ENCODE measurements at regions of chr1 and their contacts with region 1.

Region 1: DNA sequence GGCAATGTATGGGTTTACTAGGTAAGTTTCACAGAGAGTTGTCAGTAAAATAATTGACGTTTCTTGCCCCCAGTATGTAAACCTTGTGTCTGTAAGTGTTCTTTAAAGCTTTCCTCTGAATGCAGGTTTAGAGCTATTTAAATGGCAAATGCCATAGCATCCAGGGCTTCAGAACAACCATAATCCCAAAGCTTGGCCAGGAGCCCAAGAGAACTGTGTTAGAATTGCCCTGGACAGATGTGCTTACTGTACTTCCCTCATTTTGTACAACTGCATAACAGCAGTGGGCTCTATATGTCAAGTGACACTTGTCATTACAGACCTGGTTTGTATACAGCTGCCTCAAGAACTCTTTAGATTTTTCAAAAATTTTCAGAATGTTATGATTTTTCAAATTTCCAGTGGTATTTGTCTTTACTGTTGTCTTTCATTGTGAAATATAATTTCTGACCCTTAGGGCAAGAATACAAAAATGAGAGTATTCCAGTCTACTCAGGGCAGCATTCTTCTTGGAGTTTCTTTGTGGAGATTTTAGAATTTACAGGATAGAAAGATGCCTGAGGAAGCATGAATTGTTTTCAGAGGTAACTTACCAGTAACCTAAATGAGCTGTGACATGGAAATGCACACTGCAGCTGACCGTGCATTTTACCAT is 136.9 kb upstream of the L1TD1 start:
- DNase-seq: no peak
- H3K4me3 ChIP-seq: no peak overlapping the region
- H3K4me3 Mint-ChIP-seq: no peak overlapping the region
- H3K27ac Mint-ChIP-seq: no peak overlapping the region
- H3K4me1 ChIP-seq: no peaks in the 10 kb centered on the region
- H3K4me1 Mint-ChIP-seq: no peaks in the 10 kb centered on the region
- H3K27me3 ChIP-seq: no peaks in the 10 kb centered on the region
- H3K27me3 Mint-ChIP-seq: no peaks in the 10 kb centered on the region
- CTCF ChIP-seq: no peak

Region 2: DNA sequence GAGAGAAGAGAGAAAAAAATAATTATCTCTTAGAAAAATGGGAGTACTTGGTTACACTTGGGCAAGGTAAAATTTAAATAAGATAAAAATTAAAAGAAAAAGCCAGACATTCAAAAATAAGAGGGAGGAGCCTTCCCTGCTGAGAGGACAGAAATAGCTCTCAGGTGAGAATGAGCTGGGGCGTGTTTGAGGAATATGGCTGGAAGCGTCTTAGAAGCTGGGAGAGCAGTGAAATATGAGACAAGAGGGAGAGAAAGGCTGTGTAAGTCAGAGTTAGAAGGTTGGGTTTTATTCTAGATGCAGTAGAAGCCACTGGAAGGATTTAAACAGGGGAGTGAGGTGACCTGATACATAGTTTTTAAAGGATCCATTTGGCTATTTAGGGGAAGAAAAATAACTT is 17.3 kb before region 1 on chr1:
- CTCF ChIA-PET with region 1: no interaction called
- POLR2A ChIA-PET with region 1: no interaction called
- intact Hi-C with region 1: loop called (anchors 1 kb)
- DNase-seq: no peak
- H3K4me3 ChIP-seq: no peak overlapping the region
- H3K4me3 Mint-ChIP-seq: no peak overlapping the region
- H3K27ac Mint-ChIP-seq: no peak overlapping the region
- H3K4me1 ChIP-seq: peaks cover 8% of the 10 kb centered on the region
- H3K4me1 Mint-ChIP-seq: peaks cover 13% of the 10 kb centered on the region
- H3K27me3 ChIP-seq: no peaks in the 10 kb centered on the region
- H3K27me3 Mint-ChIP-seq: no peaks in the 10 kb centered on the region
- CTCF ChIP-seq: no peak

Region 3: DNA sequence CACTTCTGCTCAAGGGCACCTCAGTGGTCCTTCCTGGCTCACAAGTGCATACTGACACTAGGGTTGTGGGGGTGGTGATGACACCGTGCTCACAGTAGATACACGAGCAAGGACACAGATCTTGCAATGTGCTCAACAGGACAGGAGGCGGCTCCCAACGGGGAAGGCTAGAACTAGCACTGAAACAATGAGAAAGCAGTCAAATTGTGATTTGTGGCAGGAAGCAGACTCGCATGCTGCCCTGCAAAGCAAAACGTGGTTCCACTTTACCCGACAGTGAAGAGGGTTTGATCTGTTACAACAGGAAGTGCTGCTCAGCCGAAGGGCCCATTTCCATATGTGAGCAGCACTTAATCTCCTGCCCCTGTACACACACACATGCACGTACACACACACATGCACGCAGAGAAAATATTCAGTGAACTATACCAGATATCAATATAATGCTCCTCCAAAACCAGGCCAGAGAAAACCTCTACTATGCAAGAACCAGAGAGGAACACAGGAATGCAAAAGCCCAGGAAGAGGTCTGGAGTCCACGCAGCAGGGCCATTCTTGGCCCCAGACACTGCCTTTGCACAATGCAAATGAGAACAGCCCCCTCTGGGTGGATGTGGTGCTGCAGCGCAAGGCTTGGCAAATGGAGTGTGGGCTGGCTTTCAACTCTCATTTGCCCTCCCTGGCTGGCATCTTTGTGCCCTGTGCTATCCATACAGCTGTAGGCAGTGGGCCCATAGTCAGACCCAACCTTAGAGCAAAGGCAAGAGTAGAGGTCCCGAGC is 214.4 kb after region 1 on chr1:
- CTCF ChIA-PET with region 1: no interaction called
- POLR2A ChIA-PET with region 1: no interaction called
- intact Hi-C with region 1: no loop called
- DNase-seq: no peak
- H3K4me3 ChIP-seq: no peak overlapping the region
- H3K4me3 Mint-ChIP-seq: no peak overlapping the region
- H3K27ac Mint-ChIP-seq: no peak overlapping the region
- H3K4me1 ChIP-seq: peaks cover 7% of the 10 kb centered on the region; the same call in 1 of the 2 replicates
- H3K4me1 Mint-ChIP-seq: no peaks in the 10 kb centered on the region
- H3K27me3 ChIP-seq: no peaks in the 10 kb centered on the region
- H3K27me3 Mint-ChIP-seq: no peaks in the 10 kb centered on the region
- CTCF ChIP-seq: no peak

Measured in Caco-2 (cell line).